Activated naive CD4-positive, alpha-beta T cell treated with anti-CD3 and anti-CD28 coated beads for 36 hours (primary cell): ENCODE measurements at regions of chr9 and their contacts with region 1.

Region 1: DNA sequence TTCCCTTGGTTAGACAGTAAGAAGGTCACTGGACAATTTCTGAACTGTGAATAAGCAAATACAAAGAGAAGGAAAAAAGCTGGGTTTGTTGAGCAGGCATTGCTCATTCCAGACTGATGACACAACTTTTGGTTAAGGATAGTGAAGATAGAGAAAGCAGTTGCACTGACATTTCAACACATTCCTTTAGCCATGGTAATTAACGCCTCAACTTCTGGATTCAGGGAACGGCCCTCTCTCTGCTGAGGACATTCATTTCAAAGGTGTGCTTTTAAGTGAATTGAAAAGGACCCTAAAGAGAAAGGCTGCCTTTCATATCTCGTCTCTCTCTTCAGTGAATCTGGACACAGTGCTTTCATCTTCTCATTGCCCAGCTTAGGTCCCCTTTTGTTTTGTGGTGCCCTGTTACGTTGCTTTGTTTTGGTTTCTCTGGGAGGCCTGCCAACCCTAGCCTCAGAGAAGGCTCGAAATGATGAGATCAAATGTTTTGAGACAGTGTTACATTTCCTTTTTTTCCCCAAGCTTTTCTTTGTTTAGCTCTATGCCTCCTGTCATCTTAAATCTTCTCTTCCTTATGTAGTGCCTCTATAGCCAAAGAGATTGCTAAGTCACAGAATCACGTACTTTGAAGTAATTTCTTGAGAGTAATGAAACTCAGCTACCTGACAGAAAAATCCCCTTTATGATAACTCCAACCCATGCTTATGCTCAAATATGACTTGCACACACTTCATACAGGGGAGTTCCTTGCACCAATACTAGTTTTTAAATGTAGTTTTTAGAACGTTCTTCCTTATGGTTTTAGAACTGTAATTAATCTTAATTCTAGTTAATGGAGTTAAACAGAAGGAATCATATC is 94.4 kb upstream of the IFNE start:
- DNase-seq: peak; percentile 80
- H3K4me3 Mint-ChIP-seq: peak overlapping the region; percentile 3
- H3K27ac Mint-ChIP-seq: peak overlapping the region; percentile 68
- H3K4me1 Mint-ChIP-seq: peaks cover 37% of the 10 kb centered on the region
- H3K27me3 Mint-ChIP-seq: peaks cover 2% of the 10 kb centered on the region

Region 2: GRCh38 chr9:21591221-21592062 is 14.9 kb after region 1 on chr9:
- CTCF ChIA-PET with region 1: no interaction called
- intact Hi-C with region 1: loop called (anchors 1 kb)
- DNase-seq: peak; percentile 79
- H3K4me3 Mint-ChIP-seq: no peak overlapping the region
- H3K27ac Mint-ChIP-seq: no peak overlapping the region
- H3K4me1 Mint-ChIP-seq: peaks cover 16% of the 10 kb centered on the region
- H3K27me3 Mint-ChIP-seq: no peaks in the 10 kb centered on the region

Region 3: GRCh38 chr9:21761309-21761901 is 184.8 kb after region 1 on chr9:
- CTCF ChIA-PET with region 1: no interaction called
- intact Hi-C with region 1: loop called (anchors 2 kb)
- DNase-seq: peak; percentile 60
- H3K4me3 Mint-ChIP-seq: no peak overlapping the region
- H3K27ac Mint-ChIP-seq: no peak overlapping the region
- H3K4me1 Mint-ChIP-seq: peaks cover 13% of the 10 kb centered on the region
- H3K27me3 Mint-ChIP-seq: peaks cover 29% of the 10 kb centered on the region

Region 4: GRCh38 chr9:21802195-21803000 is 225.8 kb after region 1 on chr9 and contains the start of gene MTAP:
- CTCF ChIA-PET with region 1: no interaction called
- intact Hi-C with region 1: loop called (anchors 5 kb)
- DNase-seq: peak; percentile 82
- H3K4me3 Mint-ChIP-seq: peak within 1 kb of the TSS; percentile 99
- H3K27ac Mint-ChIP-seq: peak within 1 kb of the TSS; percentile 97
- H3K4me1 Mint-ChIP-seq: peaks cover 41% of the 10 kb centered on the region
- H3K27me3 Mint-ChIP-seq: peaks cover 4% of the 10 kb centered on the region
- total RNA-seq, gene MTAP: 59.0 to 66.4 TPM